MCF 10A (cell line): ENCODE measurements at regions of chr7 and their contacts with region 1.

Region 1: GRCh38 chr7:42071372-42072261 is 165.4 kb downstream of the GLI3 start:
- DNase-seq: peak; percentile 65
- H3K4me3 Mint-ChIP-seq: peak overlapping the region; percentile 26
- H3K27ac Mint-ChIP-seq: peak overlapping the region; percentile 84
- H3K4me1 Mint-ChIP-seq: peaks cover 46% of the 10 kb centered on the region
- H3K27me3 Mint-ChIP-seq: no peaks in the 10 kb centered on the region
- CTCF ChIP-seq: no peak

Region 2: GRCh38 chr7:40793132-40793531 is 1278.5 kb before region 1 on chr7:
- CTCF ChIA-PET with region 1: no interaction called
- POLR2A ChIA-PET with region 1: no interaction called
- intact Hi-C with region 1: no loop called
- DNase-seq: peak; percentile 5
- H3K4me3 Mint-ChIP-seq: no peak overlapping the region
- H3K27ac Mint-ChIP-seq: no peak overlapping the region
- H3K4me1 Mint-ChIP-seq: no peaks in the 10 kb centered on the region
- H3K27me3 Mint-ChIP-seq: no peaks in the 10 kb centered on the region
- CTCF ChIP-seq: no peak

Region 3: GRCh38 chr7:41803569-41803968 is 268.0 kb before region 1 on chr7:
- CTCF ChIA-PET with region 1: no interaction called
- POLR2A ChIA-PET with region 1: no interaction called
- intact Hi-C with region 1: no loop called
- DNase-seq: no peak
- H3K4me3 Mint-ChIP-seq: no peak overlapping the region
- H3K27ac Mint-ChIP-seq: no peak overlapping the region
- H3K4me1 Mint-ChIP-seq: no peaks in the 10 kb centered on the region
- H3K27me3 Mint-ChIP-seq: no peaks in the 10 kb centered on the region
- CTCF ChIP-seq: no peak

Region 4: GRCh38 chr7:41996381-41997035 is 75.1 kb before region 1 on chr7:
- CTCF ChIA-PET with region 1: interaction called, 3 read pairs
- POLR2A ChIA-PET with region 1: interaction called, 10 read pairs
- intact Hi-C with region 1: no loop called
- DNase-seq: peak; percentile 74
- H3K4me3 Mint-ChIP-seq: peak overlapping the region; percentile 60
- H3K27ac Mint-ChIP-seq: peak overlapping the region; percentile 74
- H3K4me1 Mint-ChIP-seq: peaks cover 48% of the 10 kb centered on the region
- H3K27me3 Mint-ChIP-seq: no peaks in the 10 kb centered on the region
- CTCF ChIP-seq: no peak

Region 5: GRCh38 chr7:42085531-42085930 is 13.9 kb after region 1 on chr7:
- CTCF ChIA-PET with region 1: interaction called, 12 read pairs
- POLR2A ChIA-PET with region 1: interaction called, 5 read pairs
- intact Hi-C with region 1: no loop called
- DNase-seq: no peak
- H3K4me3 Mint-ChIP-seq: no peak overlapping the region
- H3K27ac Mint-ChIP-seq: no peak overlapping the region
- H3K4me1 Mint-ChIP-seq: peaks cover 17% of the 10 kb centered on the region
- H3K27me3 Mint-ChIP-seq: no peaks in the 10 kb centered on the region
- CTCF ChIP-seq: no peak

Region 6: DNA sequence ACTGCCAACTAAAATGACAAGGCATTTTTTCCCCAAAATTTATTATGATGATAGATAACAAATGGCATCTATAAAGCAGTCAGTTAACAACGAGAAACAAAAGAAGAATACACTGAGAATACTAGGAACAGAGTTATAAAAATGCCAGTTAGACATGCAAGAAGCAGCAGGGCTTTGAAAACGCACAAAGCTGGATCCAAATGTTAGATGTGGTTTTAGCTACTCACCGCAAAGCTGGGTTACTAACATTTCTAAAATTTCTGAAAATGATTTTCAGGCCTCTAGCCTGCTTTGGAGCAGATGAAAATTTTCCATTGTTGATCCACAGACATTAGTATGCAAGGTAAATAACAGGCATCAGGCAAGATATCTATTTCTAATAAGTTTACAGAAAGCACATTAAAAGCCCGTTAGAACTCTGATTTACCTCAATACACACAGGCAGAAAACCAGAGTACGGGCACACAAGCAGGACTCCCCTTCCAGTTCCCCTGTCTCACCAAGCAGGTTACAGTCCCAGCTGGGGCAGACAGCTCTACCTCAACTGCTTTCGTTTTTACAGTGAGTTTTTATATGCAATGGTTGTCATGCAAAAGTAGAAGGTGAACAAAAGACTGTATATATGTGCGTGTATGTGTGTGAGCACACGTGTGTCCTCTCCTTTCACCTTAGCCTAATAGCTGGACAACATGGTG is 127.5 kb after region 1 on chr7:
- CTCF ChIA-PET with region 1: no interaction called
- POLR2A ChIA-PET with region 1: interaction called, 10 read pairs
- intact Hi-C with region 1: no loop called
- DNase-seq: no peak
- H3K4me3 Mint-ChIP-seq: no peak overlapping the region
- H3K27ac Mint-ChIP-seq: peak overlapping the region; percentile 81
- H3K4me1 Mint-ChIP-seq: peaks cover 38% of the 10 kb centered on the region
- H3K27me3 Mint-ChIP-seq: no peaks in the 10 kb centered on the region
- CTCF ChIP-seq: no peak

Region 7: GRCh38 chr7:42219447-42219846 is 147.8 kb after region 1 on chr7:
- CTCF ChIA-PET with region 1: interaction called, 4 read pairs
- POLR2A ChIA-PET with region 1: interaction called, 10 read pairs
- intact Hi-C with region 1: no loop called
- DNase-seq: peak; percentile 64
- H3K4me3 Mint-ChIP-seq: peak overlapping the region; percentile 50
- H3K27ac Mint-ChIP-seq: peak overlapping the region; percentile 59
- H3K4me1 Mint-ChIP-seq: peaks cover 33% of the 10 kb centered on the region
- H3K27me3 Mint-ChIP-seq: no peaks in the 10 kb centered on the region
- CTCF ChIP-seq: no peak